ENCODE measurements at regions of chr1 and their contacts with region 1.

Region 1: GRCh38 chr1:45011837-45012638 is at the start of gene UROD:
- DNase-seq: peak; percentile 61 to 94 (median 89)
- ATAC-seq: peak; percentile 93
- H3K4me3 ChIP-seq: peak within 1 kb of the TSS; percentile 65
- H3K4me3 Mint-ChIP-seq: peak within 1 kb of the TSS; percentile 90 to 100 (median 93)
- H3K27ac ChIP-seq: peak within 1 kb of the TSS; percentile 81
- H3K27ac Mint-ChIP-seq: peak within 1 kb of the TSS; percentile 89 to 98 (median 94)
- H3K4me1 ChIP-seq: peaks cover 28 to 30% of the 10 kb centered on the region in 2 donors
- H3K4me1 Mint-ChIP-seq: peaks cover 29 to 64% (median 57%) of the 10 kb centered on the region in 7 donors
- H3K27me3 ChIP-seq: no peaks in the 10 kb centered on the region
- H3K27me3 Mint-ChIP-seq: no peaks in the 10 kb centered on the region
- total RNA-seq, gene UROD: 40.7 to 72.8 (median 58.1) TPM

Region 2: GRCh38 chr1:44390277-44390676 is 621.8 kb before region 1 on chr1:
- CTCF ChIA-PET with region 1: no interaction called
- POLR2A ChIA-PET with region 1: no interaction called
- intact Hi-C with region 1: no loop called
- DNase-seq: no peak
- ATAC-seq: no peak
- H3K4me3 ChIP-seq: no peak overlapping the region
- H3K4me3 Mint-ChIP-seq: no peak overlapping the region
- H3K27ac ChIP-seq: no peak overlapping the region
- H3K27ac Mint-ChIP-seq: no peak overlapping the region
- H3K4me1 ChIP-seq: no peaks in the 10 kb centered on the region
- H3K4me1 Mint-ChIP-seq: no peaks in the 10 kb centered on the region
- H3K27me3 ChIP-seq: no peaks in the 10 kb centered on the region
- H3K27me3 Mint-ChIP-seq: peaks cover 16 to 27% (median 19%) of the 10 kb centered on the region in 5 donors

Region 3: GRCh38 chr1:44730741-44731512 is 281.1 kb before region 1 on chr1 and contains the start of gene RNU5D-1:
- CTCF ChIA-PET with region 1: interaction called, 8 read pairs
- POLR2A ChIA-PET with region 1: interaction called, 15 read pairs
- intact Hi-C with region 1: loop called (anchors 1 to 2 kb)
- DNase-seq: peak; percentile 77 to 92 (median 89)
- ATAC-seq: peak; percentile 85
- H3K4me3 ChIP-seq: peak within 1 kb of the TSS; percentile 18
- H3K4me3 Mint-ChIP-seq: peak within 1 kb of the TSS; percentile 54 to 93 (median 84)
- H3K27ac ChIP-seq: peak within 1 kb of the TSS; percentile 86
- H3K27ac Mint-ChIP-seq: peak within 1 kb of the TSS; percentile 97 to 100 (median 98)
- H3K4me1 ChIP-seq: peaks cover 10 to 13% of the 10 kb centered on the region in 2 donors
- H3K4me1 Mint-ChIP-seq: peaks cover 14 to 58% (median 43%) of the 10 kb centered on the region in 7 donors
- H3K27me3 ChIP-seq: no peaks in the 10 kb centered on the region
- H3K27me3 Mint-ChIP-seq: no peaks in the 10 kb centered on the region
- total RNA-seq, gene RNU5D-1: not detected

Region 4: DNA sequence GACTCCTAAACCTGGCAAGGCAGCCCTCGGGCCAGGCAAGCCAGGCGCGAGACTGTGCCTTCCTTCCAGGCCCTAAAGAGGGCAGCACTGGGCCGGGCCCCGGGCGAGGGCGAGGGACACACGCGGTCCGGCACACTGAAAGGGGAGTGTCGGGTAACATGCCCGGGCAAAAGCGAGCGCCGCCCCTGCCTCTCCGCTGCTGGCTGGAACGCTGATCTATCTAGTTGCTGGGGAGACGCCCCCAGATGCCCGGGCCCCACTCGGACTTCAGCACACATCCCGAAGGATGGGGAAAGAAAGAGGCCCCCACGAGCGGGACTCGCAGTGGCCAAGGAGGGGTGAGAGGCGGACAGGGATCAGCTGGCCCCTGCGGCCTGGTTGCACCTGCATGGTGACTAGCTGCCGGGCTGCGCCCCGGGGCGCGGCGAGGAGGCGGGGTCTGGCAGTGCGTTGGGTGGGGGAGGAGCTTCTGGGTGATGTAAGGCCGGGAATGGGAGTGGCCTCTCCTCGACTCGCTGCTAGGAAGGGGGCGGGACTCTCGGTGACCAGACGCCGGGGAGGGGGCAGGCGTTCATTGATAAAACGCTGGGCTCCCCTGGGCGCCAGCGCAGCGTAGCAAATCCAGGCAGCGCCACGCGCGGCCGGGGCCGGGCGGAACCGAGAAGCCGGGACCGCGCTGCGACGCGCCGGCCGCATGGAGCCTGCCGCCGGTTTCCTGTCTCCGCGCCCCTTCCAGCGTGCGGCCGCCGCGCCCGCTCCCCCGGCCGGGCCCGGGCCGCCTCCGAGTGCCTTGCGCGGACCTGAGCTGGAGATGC is 212.1 kb before region 1 on chr1 and contains the start of gene PLK3:
- CTCF ChIA-PET with region 1: interaction called, 4 read pairs
- POLR2A ChIA-PET with region 1: interaction called, 18 read pairs
- intact Hi-C with region 1: loop called in 1 of 2 experiments (anchors 2 kb)
- DNase-seq: peak; percentile 93 to 99 (median 98)
- ATAC-seq: peak; percentile 92
- H3K4me3 ChIP-seq: peak within 1 kb of the TSS; percentile 66
- H3K4me3 Mint-ChIP-seq: peak within 1 kb of the TSS; percentile 85 to 98 (median 93)
- H3K27ac ChIP-seq: peak within 1 kb of the TSS; percentile 94
- H3K27ac Mint-ChIP-seq: peak within 1 kb of the TSS; percentile 84 to 99 (median 98)
- H3K4me1 ChIP-seq: peaks cover 17 to 24% of the 10 kb centered on the region in 2 donors
- H3K4me1 Mint-ChIP-seq: peaks cover 19 to 43% (median 33%) of the 10 kb centered on the region in 7 donors
- H3K27me3 ChIP-seq: no peaks in the 10 kb centered on the region
- H3K27me3 Mint-ChIP-seq: no peaks in the 10 kb centered on the region
- total RNA-seq, gene PLK3: 92.8 to 456 (median 142) TPM

Region 5: GRCh38 chr1:44985747-44986359 is 26.2 kb before region 1 on chr1:
- CTCF ChIA-PET with region 1: interaction called, 15 read pairs
- POLR2A ChIA-PET with region 1: interaction called, 30 read pairs
- intact Hi-C with region 1: loop called (anchors 1 kb)
- DNase-seq: no peak
- ATAC-seq: no peak
- H3K4me3 ChIP-seq: peak overlapping the region; percentile 77
- H3K4me3 Mint-ChIP-seq: peak overlapping the region; percentile 90 to 100 (median 98)
- H3K27ac ChIP-seq: peak overlapping the region; percentile 68
- H3K27ac Mint-ChIP-seq: peak overlapping the region; percentile 75 to 99 (median 92)
- H3K4me1 ChIP-seq: peaks cover 8 to 13% of the 10 kb centered on the region in 2 donors
- H3K4me1 Mint-ChIP-seq: peaks cover 7 to 39% (median 23%) of the 10 kb centered on the region in 7 donors
- H3K27me3 ChIP-seq: no peaks in the 10 kb centered on the region
- H3K27me3 Mint-ChIP-seq: no peaks in the 10 kb centered on the region

Region 6: GRCh38 chr1:45339789-45340570 is 327.9 kb after region 1 on chr1 and contains the starts of genes MUTYH and TOE1:
- CTCF ChIA-PET with region 1: interaction called, 14 read pairs
- POLR2A ChIA-PET with region 1: interaction called, 61 read pairs
- intact Hi-C with region 1: loop called (anchors 1 kb)
- DNase-seq: peak; percentile 84 to 95 (median 89)
- ATAC-seq: peak; percentile 91
- H3K4me3 ChIP-seq: peak within 1 kb of the TSS; percentile 83
- H3K4me3 Mint-ChIP-seq: peak within 1 kb of the TSS; percentile 95 to 100 (median 99)
- H3K27ac ChIP-seq: peak within 1 kb of the TSS; percentile 99
- H3K27ac Mint-ChIP-seq: peak within 1 kb of the TSS; percentile 96 to 99 (median 99)
- H3K4me1 ChIP-seq: peaks cover 31 to 33% of the 10 kb centered on the region in 2 donors
- H3K4me1 Mint-ChIP-seq: peaks cover 24 to 75% (median 61%) of the 10 kb centered on the region in 7 donors
- H3K27me3 ChIP-seq: no peaks in the 10 kb centered on the region
- H3K27me3 Mint-ChIP-seq: no peaks in the 10 kb centered on the region
- total RNA-seq, gene MUTYH: 56.7 to 85.4 (median 67.7) TPM
- total RNA-seq, gene TOE1: 20.6 to 53.3 (median 25.7) TPM

Region 7: GRCh38 chr1:45455162-45455561 is 443.1 kb after region 1 on chr1:
- CTCF ChIA-PET with region 1: no interaction called
- POLR2A ChIA-PET with region 1: no interaction called
- intact Hi-C with region 1: no loop called
- DNase-seq: no peak
- ATAC-seq: no peak
- H3K4me3 ChIP-seq: no peak overlapping the region
- H3K4me3 Mint-ChIP-seq: no peak overlapping the region
- H3K27ac ChIP-seq: no peak overlapping the region
- H3K27ac Mint-ChIP-seq: no peak overlapping the region
- H3K4me1 ChIP-seq: no peaks in the 10 kb centered on the region
- H3K4me1 Mint-ChIP-seq: peaks cover 0 to 3% (median 0%) of the 10 kb centered on the region in 7 donors
- H3K27me3 ChIP-seq: no peaks in the 10 kb centered on the region
- H3K27me3 Mint-ChIP-seq: no peaks in the 10 kb centered on the region

Region 8: GRCh38 chr1:45550401-45551351 is 538.6 kb after region 1 on chr1 and contains the start of gene AKR1A1:
- CTCF ChIA-PET with region 1: interaction called, 3 read pairs
- POLR2A ChIA-PET with region 1: interaction called, 6 read pairs
- intact Hi-C with region 1: loop called in 1 of 2 experiments (anchors 1 kb)
- DNase-seq: peak; percentile 79 to 91 (median 88)
- ATAC-seq: peak; percentile 98
- H3K4me3 ChIP-seq: peak within 1 kb of the TSS; percentile 93
- H3K4me3 Mint-ChIP-seq: peak within 1 kb of the TSS; percentile 89 to 99 (median 96)
- H3K27ac ChIP-seq: peak within 1 kb of the TSS; percentile 89
- H3K27ac Mint-ChIP-seq: peak within 1 kb of the TSS; percentile 83 to 98 (median 96)
- H3K4me1 ChIP-seq: peaks cover 12 to 22% of the 10 kb centered on the region in 2 donors
- H3K4me1 Mint-ChIP-seq: peaks cover 18 to 28% (median 22%) of the 10 kb centered on the region in 7 donors
- H3K27me3 ChIP-seq: no peaks in the 10 kb centered on the region
- H3K27me3 Mint-ChIP-seq: no peaks in the 10 kb centered on the region
- total RNA-seq, gene AKR1A1: 47.5 to 155 (median 69.3) TPM

Measured in naive thymus-derived CD4-positive, alpha-beta T cell (primary cell).